B cell (primary cell): ENCODE measurements at regions of chr17 and their contacts with region 1.

Region 1: DNA sequence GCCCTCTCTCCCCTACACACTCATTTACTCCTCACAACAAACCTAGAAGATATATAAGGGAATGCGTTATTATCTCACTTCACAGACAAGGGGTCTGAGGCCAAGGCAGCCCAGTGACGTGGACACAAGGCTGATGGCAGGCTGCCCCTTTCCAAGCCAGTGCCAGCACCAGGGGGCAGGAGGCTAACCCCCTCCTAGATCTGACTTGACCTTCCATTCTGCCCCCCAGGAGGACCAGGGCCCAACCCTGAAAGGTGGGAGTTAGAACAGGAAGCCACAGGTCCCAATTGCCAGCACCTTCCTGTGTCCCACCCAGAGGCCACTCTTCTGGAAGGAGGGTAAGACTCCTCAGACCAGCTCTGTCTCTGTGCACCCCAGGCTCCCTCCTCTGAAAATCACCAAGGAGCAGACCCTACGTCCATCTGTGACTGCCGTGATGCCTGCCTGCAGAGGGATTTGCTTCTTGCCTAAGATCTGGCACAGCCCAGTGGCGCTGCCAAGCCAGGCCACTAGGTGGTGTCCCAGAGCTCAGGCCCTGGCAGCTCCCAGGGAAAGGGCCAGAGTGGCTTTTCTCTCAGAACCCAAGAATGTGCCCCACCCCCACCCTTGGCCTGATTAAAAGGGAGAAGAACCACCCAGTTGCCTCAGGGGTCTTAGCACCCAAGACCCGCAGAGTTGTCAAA is 42.4 kb upstream of the MRPS23 start:
- DNase-seq: peak; percentile 80
- ATAC-seq: peak; percentile 93
- H3K4me3 ChIP-seq: no peak overlapping the region
- H3K4me3 Mint-ChIP-seq: no peak overlapping the region
- H3K27ac ChIP-seq: no peak overlapping the region
- H3K27ac Mint-ChIP-seq: peak overlapping the region; percentile 11
- H3K4me1 ChIP-seq: peaks cover 0 to 3% of the 10 kb centered on the region in 2 donors
- H3K4me1 Mint-ChIP-seq: peaks cover 5% of the 10 kb centered on the region
- H3K27me3 ChIP-seq: peaks cover 0 to 35% (median 12%) of the 10 kb centered on the region in 4 experiments
- H3K27me3 Mint-ChIP-seq: peaks cover 41% of the 10 kb centered on the region
- CTCF ChIP-seq: peak; percentile 96

Region 2: DNA sequence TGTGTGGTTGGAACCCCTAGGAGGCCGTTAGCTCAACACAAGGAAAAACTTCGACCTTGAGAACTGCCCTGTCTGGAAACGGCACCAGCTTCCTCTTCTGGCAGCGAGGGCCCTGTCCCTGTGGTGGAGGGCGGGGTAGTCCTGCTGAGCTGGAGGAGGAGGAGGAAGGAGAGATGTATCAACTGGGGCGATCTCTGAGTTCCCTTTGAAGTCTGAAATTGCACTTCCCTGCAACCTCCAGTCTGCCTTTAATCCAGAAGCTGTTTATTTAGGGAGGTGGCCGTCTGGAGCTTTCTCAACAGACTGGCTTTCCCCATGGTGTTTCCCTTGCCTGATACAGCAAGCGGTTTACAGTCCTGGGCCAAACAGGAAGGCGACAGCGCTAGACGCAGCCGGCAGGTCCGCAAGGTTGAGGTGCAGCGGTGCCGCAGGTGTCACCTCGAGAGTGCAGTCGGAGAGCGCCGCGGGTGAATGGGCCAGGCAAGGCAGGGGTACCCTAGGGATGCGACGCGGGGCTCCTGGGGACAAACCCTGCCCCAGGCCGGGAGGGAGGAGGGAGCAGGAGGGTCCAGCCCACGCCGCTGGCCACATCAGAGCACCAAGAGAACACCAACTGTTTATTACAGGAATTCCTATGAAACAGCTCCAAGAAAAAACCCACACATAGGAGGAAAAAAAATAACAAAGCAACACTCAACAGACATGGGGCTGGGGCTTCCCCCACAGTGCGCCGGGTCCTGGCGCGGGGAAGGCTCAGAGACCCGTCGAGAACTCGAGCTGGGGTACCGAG is 31.1 kb before region 1 on chr17:
- CTCF ChIA-PET with region 1: interaction called, 30 read pairs
- POLR2A ChIA-PET with region 1: interaction called, 6 read pairs
- intact Hi-C with region 1: no loop called
- DNase-seq: peak; percentile 62
- ATAC-seq: peak; percentile 60
- H3K4me3 ChIP-seq: peak overlapping the region; percentile 3 to 59 (median 39)
- H3K4me3 Mint-ChIP-seq: peak overlapping the region; percentile 90
- H3K27ac ChIP-seq: no peak overlapping the region
- H3K27ac Mint-ChIP-seq: peak overlapping the region; percentile 11
- H3K4me1 ChIP-seq: peaks cover 17 to 20% of the 10 kb centered on the region in 2 donors
- H3K4me1 Mint-ChIP-seq: peaks cover 16% of the 10 kb centered on the region
- H3K27me3 ChIP-seq: peaks cover 0 to 51% (median 19%) of the 10 kb centered on the region in 4 experiments
- H3K27me3 Mint-ChIP-seq: peaks cover 23% of the 10 kb centered on the region
- CTCF ChIP-seq: no peak

Region 3: DNA sequence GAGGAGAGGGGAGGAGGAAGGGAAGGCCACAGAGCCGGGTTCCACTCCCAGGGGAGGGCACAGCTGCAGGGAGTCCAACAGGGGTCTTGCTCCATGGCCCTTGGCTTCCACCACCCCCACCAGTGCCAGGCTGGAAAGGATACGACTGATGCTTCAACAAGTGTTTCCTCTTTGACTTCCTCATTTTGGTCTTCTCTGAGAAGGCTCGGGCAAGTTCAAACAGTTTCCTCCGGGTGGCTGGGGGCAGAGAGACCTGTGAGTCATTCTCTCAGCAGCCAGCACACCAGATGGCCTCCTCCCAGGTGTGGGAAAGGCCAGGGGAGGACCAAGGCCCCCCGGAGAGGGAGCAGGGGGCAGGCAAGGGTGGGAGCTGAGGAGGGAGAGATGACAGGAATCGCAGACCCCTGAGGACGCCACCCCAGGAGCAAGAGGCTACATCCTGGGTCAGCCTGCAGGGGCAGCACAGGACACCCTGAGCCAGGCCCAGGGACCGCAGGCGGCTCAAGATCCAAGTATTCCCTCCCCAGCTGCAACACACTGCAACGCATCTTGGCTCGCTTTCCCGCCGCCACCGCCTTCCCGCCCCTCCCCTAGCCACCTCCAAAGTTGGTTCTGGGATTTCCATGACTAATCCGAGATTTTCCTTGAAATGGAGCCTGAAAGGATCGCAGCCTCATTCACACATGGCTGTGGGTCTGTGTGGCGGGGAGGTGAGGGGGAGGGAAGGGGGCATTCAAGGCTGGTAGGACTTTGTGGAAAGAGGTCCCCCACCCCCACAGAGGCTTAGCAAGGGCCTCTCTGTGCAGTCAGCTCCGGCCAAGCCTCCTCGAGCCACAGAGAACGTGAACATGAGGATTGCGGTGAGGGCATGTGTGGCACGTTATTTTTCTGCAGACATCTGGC is 24.0 kb before region 1 on chr17:
- CTCF ChIA-PET with region 1: interaction called, 13 read pairs
- POLR2A ChIA-PET with region 1: interaction called, 6 read pairs
- intact Hi-C with region 1: loop called (anchors 2 kb)
- DNase-seq: peak; percentile 79
- ATAC-seq: peak; percentile 91
- H3K4me3 ChIP-seq: no peak overlapping the region
- H3K4me3 Mint-ChIP-seq: peak overlapping the region; percentile 35
- H3K27ac ChIP-seq: no peak overlapping the region
- H3K27ac Mint-ChIP-seq: peak overlapping the region; percentile 71
- H3K4me1 ChIP-seq: peaks cover 26 to 27% of the 10 kb centered on the region in 2 donors
- H3K4me1 Mint-ChIP-seq: peaks cover 29% of the 10 kb centered on the region
- H3K27me3 ChIP-seq: peaks cover 0 to 28% (median 10%) of the 10 kb centered on the region in 4 experiments
- H3K27me3 Mint-ChIP-seq: peaks cover 17% of the 10 kb centered on the region
- CTCF ChIP-seq: peak; percentile 27

Region 4: DNA sequence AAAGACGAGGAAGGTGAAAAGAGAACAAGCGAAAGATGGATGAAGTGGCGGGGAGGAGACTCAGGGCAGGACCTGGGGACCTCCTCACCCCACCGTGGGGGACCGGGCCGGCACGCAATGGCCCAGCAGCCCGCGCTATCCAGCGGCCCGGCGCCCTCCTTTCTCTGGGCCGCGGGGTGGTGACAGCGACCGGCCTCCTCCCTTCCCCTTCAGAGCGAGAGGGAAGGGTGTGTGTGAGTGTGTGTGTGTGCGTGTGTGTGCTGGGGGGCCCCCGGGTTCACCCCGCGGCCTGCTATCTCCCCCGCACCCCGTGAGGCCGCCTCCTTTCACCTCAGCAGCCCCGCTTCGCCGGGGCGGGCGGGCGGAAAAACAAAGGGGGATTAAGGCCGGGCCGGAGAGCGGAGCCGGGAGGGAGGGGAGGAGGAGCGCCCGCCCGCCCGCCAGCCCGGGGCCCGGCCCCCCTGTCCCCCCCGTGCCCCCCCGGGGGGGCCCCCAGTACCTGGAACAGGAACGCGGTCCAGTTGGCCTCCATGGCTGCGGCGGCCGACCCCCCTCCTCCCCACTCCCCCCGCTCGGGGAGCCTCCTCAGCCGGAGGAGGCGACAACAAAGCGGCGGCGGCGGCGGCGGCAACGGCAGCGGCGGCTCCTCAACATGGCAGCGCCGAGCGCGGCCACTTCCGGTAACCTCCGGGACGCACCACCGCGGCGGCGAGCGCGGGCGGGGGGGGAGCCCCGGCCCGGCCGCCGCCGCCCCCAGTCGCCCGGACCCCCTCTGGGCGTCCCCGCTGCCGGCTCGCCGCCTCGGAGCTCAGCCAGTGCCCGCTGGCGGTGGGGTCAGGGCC is 95.5 kb after region 1 on chr17 and contains the start of gene VEZF1:
- CTCF ChIA-PET with region 1: interaction called, 214 read pairs
- POLR2A ChIA-PET with region 1: no interaction called
- intact Hi-C with region 1: no loop called
- DNase-seq: peak; percentile 89
- ATAC-seq: peak; percentile 70
- H3K4me3 ChIP-seq: peak within 1 kb of the TSS; percentile 50 to 89 (median 82)
- H3K4me3 Mint-ChIP-seq: peak within 1 kb of the TSS; percentile 95
- H3K27ac ChIP-seq: peak within 1 kb of the TSS; percentile 66 to 82
- H3K27ac Mint-ChIP-seq: peak within 1 kb of the TSS; percentile 97
- H3K4me1 ChIP-seq: peaks cover 36 to 41% of the 10 kb centered on the region in 2 donors
- H3K4me1 Mint-ChIP-seq: peaks cover 58% of the 10 kb centered on the region
- H3K27me3 ChIP-seq: no peaks in the 10 kb centered on the region
- H3K27me3 Mint-ChIP-seq: no peaks in the 10 kb centered on the region
- CTCF ChIP-seq: no peak
- total RNA-seq, gene VEZF1: 63.9 and 75.9 TPM in 2 replicates